ENCODE measurements at regions of chr3 and their contacts with region 1.

Region 1: DNA sequence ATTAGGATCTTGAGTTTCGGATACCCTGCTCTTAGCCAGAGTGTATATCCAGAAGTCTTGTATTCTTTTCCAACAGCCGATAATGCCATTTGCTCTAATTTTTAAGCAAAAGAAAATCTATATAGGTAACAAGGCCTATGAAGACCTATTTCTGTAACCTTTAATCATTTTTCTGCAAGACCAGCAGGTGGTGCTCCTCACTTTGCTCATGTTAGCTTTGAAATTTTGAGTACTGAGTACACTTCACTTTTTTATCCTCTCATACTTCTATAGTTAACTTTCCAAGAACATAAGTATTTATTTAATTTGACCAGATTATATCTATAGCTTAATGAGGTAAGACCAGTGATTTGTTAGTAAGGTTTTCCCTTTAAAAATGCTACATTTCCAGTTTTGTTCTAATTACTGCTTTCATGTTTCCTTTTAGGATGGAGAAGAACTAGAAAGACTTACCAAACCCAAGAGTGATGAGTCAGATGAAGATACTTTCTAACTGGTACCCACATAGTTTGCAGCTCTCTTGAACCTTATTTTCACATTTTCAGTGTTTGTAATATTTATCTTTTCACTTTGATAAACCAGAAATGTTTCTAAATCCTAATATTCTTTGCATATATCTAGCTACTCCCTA is 20.5 kb downstream of the SLC35A5 start:
- DNase-seq: peak; percentile 59
- H3K4me3 Mint-ChIP-seq: no peak overlapping the region
- H3K27ac Mint-ChIP-seq: no peak overlapping the region
- H3K4me1 Mint-ChIP-seq: peaks cover 7% of the 10 kb centered on the region
- H3K27me3 Mint-ChIP-seq: no peaks in the 10 kb centered on the region

Region 2: DNA sequence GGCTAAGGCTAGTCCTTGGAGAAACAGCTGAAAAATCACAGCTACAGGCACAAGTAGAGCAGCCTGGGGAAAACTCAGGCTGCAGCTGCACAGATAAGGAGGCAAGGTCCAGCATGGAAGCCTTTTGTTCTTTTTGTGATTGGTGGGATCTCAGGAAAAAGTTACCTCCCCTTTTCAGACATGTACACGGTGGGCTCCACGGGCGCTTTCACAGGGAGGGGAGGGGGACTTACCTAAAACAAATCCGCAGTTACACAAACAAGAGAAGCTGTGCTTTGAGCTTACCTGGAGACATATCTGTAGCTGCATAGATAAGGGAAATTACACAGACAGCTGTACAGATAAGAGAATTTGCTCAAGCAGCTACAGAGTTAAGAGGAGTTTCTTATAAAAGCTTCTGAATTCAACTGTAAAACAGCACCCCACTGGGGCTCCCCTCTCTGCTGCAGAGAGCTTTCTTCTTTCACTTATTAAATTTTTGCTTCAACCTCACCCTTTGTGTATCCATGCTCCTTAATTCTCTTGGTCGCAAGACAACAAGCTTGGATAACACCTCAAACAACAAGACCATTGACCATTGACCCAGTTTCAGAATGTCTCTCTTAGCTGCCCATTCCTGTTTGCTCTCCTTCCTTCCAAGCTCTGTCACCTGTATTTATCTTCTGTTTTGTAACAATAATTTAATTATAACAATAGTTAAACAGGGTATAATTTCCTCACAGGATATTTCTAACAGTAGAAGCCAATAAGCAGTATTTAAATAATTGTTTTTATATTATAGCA is 260.3 kb before region 1 on chr3:
- CTCF ChIA-PET with region 1: no interaction called
- DNase-seq: no peak
- H3K4me3 Mint-ChIP-seq: no peak overlapping the region
- H3K27ac Mint-ChIP-seq: no peak overlapping the region
- H3K4me1 Mint-ChIP-seq: peaks cover 6% of the 10 kb centered on the region
- H3K27me3 Mint-ChIP-seq: peaks cover 30% of the 10 kb centered on the region

Region 3: GRCh38 chr3:112605285-112605684 is 22.9 kb after region 1 on chr3:
- CTCF ChIA-PET with region 1: interaction called, 11 read pairs
- DNase-seq: no peak
- H3K4me3 Mint-ChIP-seq: no peak overlapping the region
- H3K27ac Mint-ChIP-seq: no peak overlapping the region
- H3K4me1 Mint-ChIP-seq: peaks cover 22% of the 10 kb centered on the region
- H3K27me3 Mint-ChIP-seq: peaks cover 12% of the 10 kb centered on the region

Region 4: GRCh38 chr3:112671930-112672715 is 89.8 kb after region 1 on chr3:
- CTCF ChIA-PET with region 1: no interaction called
- DNase-seq: no peak
- H3K4me3 Mint-ChIP-seq: peak overlapping the region; percentile 2
- H3K27ac Mint-ChIP-seq: peak overlapping the region; percentile 86
- H3K4me1 Mint-ChIP-seq: peaks cover 78% of the 10 kb centered on the region
- H3K27me3 Mint-ChIP-seq: peaks cover 10% of the 10 kb centered on the region

Region 5: DNA sequence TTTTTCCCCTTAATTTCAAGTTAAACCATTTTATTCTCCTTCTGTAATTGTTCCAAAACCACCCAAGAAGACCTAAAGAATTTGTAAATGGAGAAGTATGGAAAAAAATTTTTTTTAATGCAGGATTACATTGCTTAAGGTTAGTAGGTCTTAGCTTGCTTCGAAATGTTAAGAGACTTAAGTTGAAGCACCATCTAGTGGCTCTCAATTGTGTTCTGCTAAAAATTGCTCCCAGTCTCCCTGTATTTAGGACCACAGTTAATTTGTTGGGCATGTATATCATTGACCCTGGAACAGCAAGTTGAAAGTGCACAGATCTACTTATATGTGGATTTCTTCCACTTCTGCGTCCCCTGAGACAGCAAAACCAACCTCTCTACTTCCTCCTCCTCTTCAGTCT is 231.9 kb after region 1 on chr3:
- CTCF ChIA-PET with region 1: interaction called, 12 read pairs
- DNase-seq: no peak
- H3K4me3 Mint-ChIP-seq: no peak overlapping the region
- H3K27ac Mint-ChIP-seq: no peak overlapping the region
- H3K4me1 Mint-ChIP-seq: peaks cover 13% of the 10 kb centered on the region
- H3K27me3 Mint-ChIP-seq: peaks cover 4% of the 10 kb centered on the region